Thyroid gland (tissue), 4 donors: ENCODE measurements at regions of chr10 and their contacts with region 1.

Region 1: DNA sequence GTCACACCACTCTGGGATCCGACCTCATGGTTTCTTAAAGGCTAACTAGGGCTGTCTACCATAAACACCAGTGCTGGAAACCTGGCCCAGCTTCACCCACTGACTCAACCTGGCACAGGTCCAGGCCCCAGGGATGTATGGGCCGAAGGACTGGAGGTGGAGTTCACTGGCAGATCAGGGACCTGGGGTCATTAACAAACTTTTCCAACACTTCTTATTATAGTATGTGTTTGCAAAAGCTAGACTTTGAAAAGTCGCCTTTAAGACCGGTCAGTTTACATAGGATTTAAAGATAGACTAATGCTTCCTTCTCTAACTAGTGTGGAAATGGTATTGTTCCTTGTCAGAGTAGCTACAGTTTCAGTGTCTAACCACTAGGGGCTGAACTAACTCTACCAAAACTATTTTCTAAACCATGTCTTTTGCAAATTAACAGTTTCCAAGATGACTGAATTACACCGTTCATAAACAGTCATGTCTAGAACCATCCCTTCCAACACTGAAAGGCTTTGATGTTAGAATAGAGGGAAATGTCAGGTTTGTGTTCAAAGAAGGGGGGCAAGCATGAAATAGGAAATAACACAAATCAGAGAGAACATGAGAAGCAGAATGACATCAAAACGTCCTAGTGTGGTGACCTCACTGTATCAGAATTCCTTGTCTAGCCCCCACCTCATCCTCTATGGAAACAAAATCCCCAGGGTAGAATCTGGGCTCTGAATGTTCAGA is 29.7 kb downstream of the STN1 start:
- DNase-seq: peak; percentile 16 to 36
- H3K4me3 ChIP-seq: no peak overlapping the region
- H3K27ac ChIP-seq: no peak overlapping the region
- H3K4me1 ChIP-seq: peaks cover 0 to 4% of the 10 kb centered on the region in 2 donors
- H3K27me3 ChIP-seq: no peaks in the 10 kb centered on the region
- CTCF ChIP-seq: peak; percentile 70 to 87 (median 78)
- POLR2A ChIP-seq: no peak

Region 2: DNA sequence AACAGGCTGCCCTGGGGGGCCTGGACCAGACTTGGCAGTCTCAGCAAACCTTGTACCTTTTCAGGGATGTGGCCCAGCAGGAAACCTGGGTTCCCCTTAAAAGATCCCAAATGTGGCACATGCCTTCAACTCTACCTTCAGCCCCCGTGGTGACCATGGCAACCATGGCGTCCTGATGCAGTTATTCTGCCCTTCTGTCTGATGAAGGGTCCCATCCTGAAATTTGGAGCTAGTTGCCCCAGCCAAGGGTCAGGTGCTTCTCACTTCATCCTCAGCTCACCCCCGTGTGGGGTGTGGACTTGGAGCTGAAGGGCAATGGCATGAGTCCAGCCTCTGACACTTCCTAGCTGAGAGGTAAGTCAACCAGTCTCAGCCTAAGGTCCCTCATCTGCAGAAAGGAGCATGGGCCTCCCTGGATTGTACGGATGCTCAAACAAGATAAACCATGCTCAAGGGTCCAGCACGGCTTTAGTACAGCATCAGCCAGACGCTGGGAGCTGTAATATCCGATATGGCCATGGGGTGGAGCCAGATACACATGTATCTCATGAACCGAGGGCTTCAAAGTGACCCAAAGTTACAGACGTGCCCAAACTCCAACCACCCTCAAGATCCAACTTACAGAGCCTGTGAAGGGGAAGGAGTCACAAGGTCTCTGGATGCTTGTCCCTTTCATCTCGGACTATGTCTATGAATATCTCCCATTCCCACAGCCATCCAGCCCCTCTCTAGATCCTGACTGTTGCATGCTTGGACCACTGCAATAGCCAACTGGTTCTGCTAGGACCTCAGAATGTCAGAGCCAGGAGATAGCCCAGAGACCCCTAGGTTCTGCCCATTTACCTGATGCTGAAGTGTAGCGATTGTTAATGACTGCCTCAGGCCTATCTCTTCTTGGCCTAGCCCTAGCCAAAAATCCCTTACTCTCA is 175.4 kb before region 1 on chr10:
- intact Hi-C with region 1: loop called (anchors 5 kb)
- DNase-seq: peak; percentile 82 to 84
- H3K4me3 ChIP-seq: no peak overlapping the region
- H3K27ac ChIP-seq: no peak overlapping the region
- H3K4me1 ChIP-seq: no peaks in the 10 kb centered on the region
- H3K27me3 ChIP-seq: no peaks in the 10 kb centered on the region
- CTCF ChIP-seq: peak; percentile 72 to 95 (median 88)
- POLR2A ChIP-seq: no peak

Region 3: DNA sequence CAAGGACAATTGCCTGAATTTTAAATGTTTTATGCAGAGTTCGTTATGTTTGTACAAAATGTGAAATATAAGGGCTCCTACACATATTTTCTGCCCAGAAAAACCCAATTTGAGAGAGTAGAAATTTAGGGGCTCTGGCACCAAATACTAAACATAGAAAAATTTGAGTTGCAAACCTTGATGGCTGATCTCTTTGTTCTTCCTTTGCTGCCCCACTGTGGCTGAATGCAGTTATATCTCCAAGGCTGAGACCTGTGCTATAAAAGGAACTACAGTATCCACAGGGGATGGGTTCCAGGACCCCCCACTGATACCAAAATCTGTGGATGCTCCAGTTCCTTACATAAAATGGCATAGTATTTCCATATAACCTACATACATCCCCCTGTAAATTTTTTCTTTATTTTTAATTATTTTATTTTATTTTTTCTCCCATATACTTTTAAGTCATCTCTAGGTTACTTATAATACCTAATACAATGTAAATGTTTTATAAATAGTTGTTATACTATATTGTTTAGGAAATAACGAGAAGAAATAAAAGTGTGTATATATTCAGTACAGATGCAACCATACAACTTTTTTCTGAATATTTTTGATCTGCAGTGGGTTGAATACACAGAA is 321.4 kb after region 1 on chr10:
- intact Hi-C with region 1: loop called (anchors 5 kb)
- DNase-seq: peak; percentile 29 to 35
- H3K4me3 ChIP-seq: no peak overlapping the region
- H3K27ac ChIP-seq: no peak overlapping the region
- H3K4me1 ChIP-seq: no peaks in the 10 kb centered on the region
- H3K27me3 ChIP-seq: no peaks in the 10 kb centered on the region
- CTCF ChIP-seq: peak in 4 of 6 experiments; percentile 35 to 56 (median 54)
- POLR2A ChIP-seq: no peak